HCT116 (cell line): ENCODE measurements at regions of chr6 and their contacts with region 1.

Region 1: GRCh38 chr6:135675862-135676261 is 175.6 kb upstream of the PDE7B start:
- DNase-seq: peak; percentile 23
- ATAC-seq: peak; percentile 59; the same call in 1 of the 2 replicates
- H3K4me3 ChIP-seq: no peak overlapping the region
- H3K27ac ChIP-seq: no peak overlapping the region
- H3K4me1 ChIP-seq: no peaks in the 10 kb centered on the region
- H3K27me3 ChIP-seq: no peaks in the 10 kb centered on the region
- CTCF ChIP-seq: peak in 2 of 3 experiments; percentile 41; a peak in 3 of 6 replicates
- POLR2A ChIP-seq: no peak
- RAD21 ChIP-seq: peak; percentile 70

Region 2: DNA sequence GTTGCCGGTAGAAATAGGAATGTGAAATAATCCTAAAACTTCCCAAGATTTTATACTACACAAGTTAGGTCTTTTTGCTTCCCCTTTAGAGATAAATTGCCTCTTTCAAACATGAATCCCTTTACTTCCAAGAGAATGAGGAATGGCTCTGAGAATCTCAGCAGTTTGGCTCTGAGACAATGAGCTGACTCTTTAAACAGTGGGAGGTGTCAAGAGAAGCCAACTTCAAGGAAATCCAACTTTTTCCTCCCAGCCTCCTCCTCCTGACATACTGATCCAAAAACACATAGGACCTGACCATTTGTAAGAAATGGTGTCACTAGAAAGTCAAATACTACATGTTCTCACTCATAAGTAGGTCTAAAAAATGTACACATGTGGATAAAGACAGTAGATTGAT is 880.2 kb before region 1 on chr6:
- CTCF ChIA-PET with region 1: no interaction called
- POLR2A ChIA-PET with region 1: no interaction called
- RAD21 ChIA-PET with region 1: no interaction called
- intact Hi-C with region 1: no loop called
- DNase-seq: no peak
- ATAC-seq: no peak
- H3K4me3 ChIP-seq: no peak overlapping the region
- H3K27ac ChIP-seq: no peak overlapping the region
- H3K4me1 ChIP-seq: no peaks in the 10 kb centered on the region
- H3K27me3 ChIP-seq: no peaks in the 10 kb centered on the region
- CTCF ChIP-seq: no peak
- POLR2A ChIP-seq: no peak
- RAD21 ChIP-seq: no peak

Region 3: DNA sequence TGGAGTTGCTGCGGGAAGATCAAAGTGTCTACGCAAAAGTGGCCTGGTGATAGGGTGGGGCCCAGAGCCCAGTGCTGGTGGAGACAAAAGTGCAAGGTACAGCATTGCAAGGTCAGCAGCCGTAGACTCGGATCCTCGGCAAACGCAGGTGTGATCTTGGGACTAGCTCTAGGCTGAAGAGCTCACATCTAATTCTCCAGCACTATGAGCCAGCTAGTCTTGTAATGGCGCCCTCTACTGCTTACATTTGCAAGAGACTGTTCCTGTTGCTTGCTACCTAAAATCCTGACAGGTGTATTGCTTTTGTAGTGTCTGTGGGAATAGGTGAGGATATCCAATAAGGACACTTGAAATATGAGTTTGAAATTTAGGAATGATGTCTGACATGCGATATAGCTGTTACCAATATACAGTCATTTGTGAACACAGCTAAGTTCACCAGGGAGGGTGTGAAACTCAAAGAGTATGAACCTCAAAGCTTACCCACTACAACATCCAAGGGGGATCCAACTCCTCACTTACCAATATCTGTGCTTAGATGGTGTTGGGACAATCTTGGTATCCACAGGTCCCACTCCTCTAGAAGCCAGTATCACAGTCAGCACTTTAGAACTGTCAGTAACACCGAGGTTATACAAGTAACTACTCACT is 234.0 kb after region 1 on chr6:
- CTCF ChIA-PET with region 1: interaction called, 4 read pairs
- POLR2A ChIA-PET with region 1: no interaction called
- RAD21 ChIA-PET with region 1: no interaction called
- intact Hi-C with region 1: loop called (anchors 5 kb)
- DNase-seq: peak; percentile 76
- ATAC-seq: peak; percentile 99
- H3K4me3 ChIP-seq: no peak overlapping the region
- H3K27ac ChIP-seq: no peak overlapping the region
- H3K4me1 ChIP-seq: peaks cover 0 to 1% of the 10 kb centered on the region in 2 experiments; a peak in 2 of 4 replicates
- H3K27me3 ChIP-seq: no peaks in the 10 kb centered on the region
- CTCF ChIP-seq: peak; percentile 59 to 85 (median 73)
- POLR2A ChIP-seq: no peak
- RAD21 ChIP-seq: peak; percentile 72